Lower leg skin (tissue), 4 donors: ENCODE measurements at regions of chr10 and their contacts with region 1.

Region 1: GRCh38 chr10:67520924-67521520 is 175.0 kb downstream of the CTNNA3 start:
- DNase-seq: no peak
- H3K4me3 ChIP-seq: no peak overlapping the region
- CTCF ChIP-seq: no peak
- POLR2A ChIP-seq: no peak

Region 2: DNA sequence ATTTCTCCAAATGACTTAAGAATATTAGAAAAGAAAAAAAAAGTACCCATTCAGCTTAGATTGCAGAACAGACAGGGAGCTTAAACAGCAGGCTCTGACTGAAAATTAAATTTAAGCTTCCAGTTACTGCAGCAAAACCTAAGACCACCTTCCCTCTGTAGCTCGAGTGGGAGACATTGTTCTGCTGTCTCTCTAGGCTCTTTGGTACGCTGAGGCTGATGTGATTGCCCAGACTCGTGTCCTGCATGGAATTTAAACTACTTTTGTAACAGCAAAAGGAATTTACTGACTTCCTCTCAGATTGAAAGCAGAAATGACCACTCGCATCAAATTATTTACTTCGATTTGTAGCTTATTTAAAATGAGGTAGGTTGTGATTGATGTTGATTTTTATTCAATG is 470.6 kb before region 1 on chr10:
- intact Hi-C with region 1: no loop called
- DNase-seq: no peak
- H3K4me3 ChIP-seq: no peak overlapping the region
- CTCF ChIP-seq: no peak
- POLR2A ChIP-seq: no peak

Region 3: DNA sequence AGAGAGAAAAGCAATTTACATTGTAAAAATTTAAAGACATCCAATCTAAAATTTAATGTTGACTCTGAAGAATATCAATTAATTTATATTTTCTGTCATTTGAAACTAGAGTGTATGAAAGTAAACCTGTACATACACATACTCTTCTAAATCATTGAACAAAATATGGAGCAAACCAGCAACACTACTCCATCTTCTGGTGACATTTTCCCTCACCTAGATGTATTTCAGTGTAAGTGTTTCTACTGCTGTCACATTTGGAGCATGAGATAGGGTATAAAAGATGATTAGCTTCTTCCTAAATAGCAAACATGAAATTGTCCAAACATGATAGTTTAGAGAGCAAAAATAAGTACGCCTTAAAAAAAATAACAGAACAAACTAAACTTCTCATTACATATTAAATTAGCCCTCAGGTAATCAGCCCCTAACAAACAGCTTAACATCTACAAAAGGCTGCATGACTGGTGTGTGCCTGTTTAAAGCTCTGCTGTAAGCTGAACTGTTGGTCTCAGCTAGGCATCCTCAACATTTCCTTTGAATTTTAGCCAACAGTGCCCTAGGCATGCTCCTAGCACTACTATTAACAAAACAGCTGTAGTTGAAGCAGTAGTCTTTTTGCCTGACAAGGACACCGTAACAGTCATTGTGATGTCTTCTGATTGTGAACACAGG is 14.8 kb before region 1 on chr10:
- intact Hi-C with region 1: loop called (anchors 2 kb)
- DNase-seq: no peak
- H3K4me3 ChIP-seq: no peak overlapping the region
- CTCF ChIP-seq: no peak
- POLR2A ChIP-seq: no peak

Region 4: DNA sequence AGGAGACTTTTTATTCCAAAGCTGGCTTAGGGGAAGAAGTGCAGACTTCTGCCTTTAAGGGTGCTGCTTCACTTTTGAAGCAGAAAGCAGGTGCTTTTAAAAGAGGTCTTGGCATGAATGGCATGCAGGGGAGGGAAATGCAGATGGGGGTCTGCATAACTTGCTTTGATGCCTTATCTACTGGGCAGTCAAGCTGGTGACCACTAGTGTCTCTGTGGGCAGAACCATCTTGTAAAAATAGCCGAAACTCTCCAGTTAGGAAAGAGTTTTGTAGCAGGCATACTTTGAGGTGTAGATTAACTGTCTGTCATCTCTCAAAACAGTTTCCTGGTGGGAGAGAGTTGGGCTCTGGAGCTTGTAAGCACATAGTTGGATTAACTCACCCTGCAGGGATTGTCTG is 184.9 kb after region 1 on chr10:
- intact Hi-C with region 1: no loop called
- DNase-seq: no peak
- H3K4me3 ChIP-seq: no peak overlapping the region
- CTCF ChIP-seq: no peak
- POLR2A ChIP-seq: no peak